ENCODE measurements at regions of chr4 and their contacts with region 1.

Region 1: DNA sequence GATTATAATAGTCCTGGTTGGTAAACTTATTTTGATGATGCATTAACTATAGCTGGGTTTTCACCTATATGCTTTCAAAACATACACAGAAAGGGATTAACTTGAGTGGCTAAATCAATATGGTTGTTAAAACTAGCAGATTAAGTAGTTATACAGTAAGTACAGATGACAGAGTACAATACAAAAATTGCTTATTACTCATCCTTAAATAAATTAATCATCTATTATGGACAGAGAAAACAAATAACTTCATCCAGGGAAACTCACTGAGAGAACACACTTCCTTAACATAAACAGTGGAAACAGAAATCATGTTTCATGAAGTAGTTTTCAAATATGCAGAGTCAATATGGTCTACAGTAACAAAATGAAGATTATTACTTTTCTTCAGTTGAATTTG is 133.4 kb downstream of the AREG start:
- DNase-seq: no peak
- ATAC-seq: no peak; the same call in 1 of the 2 replicates
- H3K4me3 ChIP-seq: no peak overlapping the region
- H3K27ac ChIP-seq: no peak overlapping the region
- H3K4me1 ChIP-seq: no peaks in the 10 kb centered on the region
- H3K27me3 ChIP-seq: no peaks in the 10 kb centered on the region; the same call in 1 of the 2 replicates
- CTCF ChIP-seq: no peak
- POLR2A ChIP-seq: no peak
- RAD21 ChIP-seq: no peak

Region 2: GRCh38 chr4:74397748-74398426 is 180.4 kb before region 1 on chr4:
- CTCF ChIA-PET with region 1: no interaction called
- POLR2A ChIA-PET with region 1: no interaction called
- dilution Hi-C with region 1: no loop called
- in situ Hi-C with region 1: no loop called
- intact Hi-C with region 1: no loop called
- DNase-seq: peak; percentile 4
- ATAC-seq: no peak
- H3K4me3 ChIP-seq: no peak overlapping the region
- H3K27ac ChIP-seq: no peak overlapping the region
- H3K4me1 ChIP-seq: peaks cover 9% of the 10 kb centered on the region; the same call in 1 of the 2 replicates
- H3K27me3 ChIP-seq: no peaks in the 10 kb centered on the region
- CTCF ChIP-seq: no peak
- POLR2A ChIP-seq: no peak
- RAD21 ChIP-seq: no peak

Region 3: GRCh38 chr4:74503580-74503979 is 74.7 kb before region 1 on chr4:
- CTCF ChIA-PET with region 1: no interaction called
- POLR2A ChIA-PET with region 1: no interaction called
- dilution Hi-C with region 1: no loop called
- in situ Hi-C with region 1: no loop called
- intact Hi-C with region 1: loop called (anchors 2 kb)
- DNase-seq: peak; percentile 88
- ATAC-seq: no peak
- H3K4me3 ChIP-seq: no peak overlapping the region
- H3K27ac ChIP-seq: peak overlapping the region; percentile 57
- H3K4me1 ChIP-seq: peaks cover 26% of the 10 kb centered on the region
- H3K27me3 ChIP-seq: no peaks in the 10 kb centered on the region
- CTCF ChIP-seq: no peak
- POLR2A ChIP-seq: no peak
- RAD21 ChIP-seq: no peak